ENCODE measurements at regions of chr2 and their contacts with region 1.

Region 1: DNA sequence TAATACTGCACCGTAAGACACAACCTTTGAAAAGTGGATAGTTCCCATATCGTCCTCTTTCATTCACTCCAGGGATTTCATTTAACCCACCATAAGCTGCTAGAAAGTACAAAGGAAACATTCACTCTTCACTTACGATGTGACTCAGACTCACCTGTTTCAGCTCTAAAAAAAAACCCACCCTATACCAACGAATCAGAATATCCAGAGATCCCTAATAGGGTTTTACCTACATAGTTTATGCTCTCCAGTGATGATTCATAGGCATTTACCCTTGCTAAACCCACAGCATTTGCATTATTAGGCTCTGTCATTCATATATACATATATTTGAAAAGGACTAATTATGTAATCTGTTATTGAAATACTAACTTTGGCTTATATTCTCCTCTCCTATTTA is 60.2 kb downstream of the PRPF40A start:
- DNase-seq: no peak
- H3K4me3 Mint-ChIP-seq: no peak overlapping the region
- H3K27ac Mint-ChIP-seq: no peak overlapping the region
- H3K4me1 Mint-ChIP-seq: peaks cover 9% of the 10 kb centered on the region
- H3K27me3 Mint-ChIP-seq: no peaks in the 10 kb centered on the region

Region 2: GRCh38 chr2:152200562-152201465 is 456.2 kb before region 1 on chr2:
- intact Hi-C with region 1: no loop called
- DNase-seq: no peak
- H3K4me3 Mint-ChIP-seq: no peak overlapping the region
- H3K27ac Mint-ChIP-seq: no peak overlapping the region
- H3K4me1 Mint-ChIP-seq: peaks cover 12% of the 10 kb centered on the region
- H3K27me3 Mint-ChIP-seq: peaks cover 9% of the 10 kb centered on the region

Region 3: GRCh38 chr2:152676461-152676860 is 19.4 kb after region 1 on chr2:
- intact Hi-C with region 1: loop called (anchors 2 kb)
- DNase-seq: no peak
- H3K4me3 Mint-ChIP-seq: no peak overlapping the region
- H3K27ac Mint-ChIP-seq: no peak overlapping the region
- H3K4me1 Mint-ChIP-seq: peaks cover 9% of the 10 kb centered on the region
- H3K27me3 Mint-ChIP-seq: no peaks in the 10 kb centered on the region

Region 4: DNA sequence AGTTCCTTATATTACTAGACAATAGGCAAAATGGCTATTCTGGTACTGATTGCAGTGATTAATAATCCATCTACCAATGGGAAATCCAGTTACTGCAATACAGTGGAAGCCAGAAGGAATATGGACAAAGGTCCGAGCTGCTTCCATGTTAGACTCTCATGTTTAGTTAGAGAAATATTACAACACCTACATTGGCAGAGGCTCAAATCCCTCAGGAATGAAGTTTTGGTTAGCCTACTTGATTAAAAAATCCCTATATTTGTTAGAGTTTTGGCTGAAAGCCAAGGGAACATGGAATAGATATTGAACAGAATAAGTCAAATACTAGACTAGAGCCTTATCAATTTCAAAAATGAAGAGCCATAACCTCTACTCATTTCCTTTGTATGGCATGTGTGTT is 109.9 kb after region 1 on chr2:
- intact Hi-C with region 1: no loop called
- DNase-seq: no peak
- H3K4me3 Mint-ChIP-seq: no peak overlapping the region
- H3K27ac Mint-ChIP-seq: no peak overlapping the region
- H3K4me1 Mint-ChIP-seq: no peaks in the 10 kb centered on the region
- H3K27me3 Mint-ChIP-seq: no peaks in the 10 kb centered on the region